PC-9 (cell line): ENCODE measurements at regions of chr20 and their contacts with region 1.

Region 1: DNA sequence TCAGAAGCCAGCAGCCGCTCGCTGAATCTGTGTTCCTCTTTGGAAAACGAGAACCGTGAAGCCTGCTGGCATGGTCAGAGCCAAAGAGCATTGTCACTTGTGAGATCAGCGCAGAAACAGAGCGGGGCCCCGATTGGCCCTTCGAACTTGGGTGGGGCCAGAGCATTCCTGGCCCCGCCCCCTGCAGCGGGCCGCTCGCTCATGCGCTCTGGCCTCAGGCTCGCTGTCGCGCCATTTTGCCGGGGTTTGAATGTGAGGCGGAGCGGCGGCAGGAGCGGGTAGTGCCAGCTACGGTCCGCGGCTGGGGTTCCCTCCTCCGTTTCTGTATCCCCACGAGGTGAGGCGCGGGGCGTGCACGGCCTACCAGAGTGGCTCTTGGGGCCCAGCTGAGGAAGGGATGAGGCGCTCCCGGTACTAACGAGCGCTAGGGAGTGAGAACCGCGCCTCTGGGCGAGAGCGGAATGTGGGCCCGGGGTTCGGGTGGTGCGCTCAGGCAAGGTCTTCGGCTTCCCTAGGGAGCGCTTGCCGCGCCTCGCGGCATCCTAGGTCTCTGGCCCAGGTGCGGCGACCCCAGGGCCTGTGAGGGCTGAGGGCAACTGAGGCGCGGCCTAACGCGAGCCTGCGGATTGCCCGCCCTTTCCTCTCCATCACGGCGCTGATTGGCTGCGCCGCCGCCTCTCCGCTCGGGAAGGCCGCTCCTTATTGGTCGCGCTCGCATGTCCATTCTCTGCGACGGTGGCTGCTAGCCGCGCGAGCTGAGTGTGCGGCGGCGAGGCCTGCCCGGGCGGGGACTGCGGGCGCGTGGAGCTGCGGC is at the start of gene CSE1L:
- DNase-seq: peak; percentile 85 to 96
- H3K4me3 ChIP-seq: peak within 1 kb of the TSS; percentile 96
- H3K27ac ChIP-seq: peak within 1 kb of the TSS; percentile 62
- H3K4me1 ChIP-seq: peaks cover 19% of the 10 kb centered on the region
- H3K27me3 ChIP-seq: no peaks in the 10 kb centered on the region
- CTCF ChIP-seq: no peak; the same call in 1 of the 2 replicates
- total RNA-seq, gene CSE1L: 83.1 and 132 TPM in 2 replicates

Region 2: DNA sequence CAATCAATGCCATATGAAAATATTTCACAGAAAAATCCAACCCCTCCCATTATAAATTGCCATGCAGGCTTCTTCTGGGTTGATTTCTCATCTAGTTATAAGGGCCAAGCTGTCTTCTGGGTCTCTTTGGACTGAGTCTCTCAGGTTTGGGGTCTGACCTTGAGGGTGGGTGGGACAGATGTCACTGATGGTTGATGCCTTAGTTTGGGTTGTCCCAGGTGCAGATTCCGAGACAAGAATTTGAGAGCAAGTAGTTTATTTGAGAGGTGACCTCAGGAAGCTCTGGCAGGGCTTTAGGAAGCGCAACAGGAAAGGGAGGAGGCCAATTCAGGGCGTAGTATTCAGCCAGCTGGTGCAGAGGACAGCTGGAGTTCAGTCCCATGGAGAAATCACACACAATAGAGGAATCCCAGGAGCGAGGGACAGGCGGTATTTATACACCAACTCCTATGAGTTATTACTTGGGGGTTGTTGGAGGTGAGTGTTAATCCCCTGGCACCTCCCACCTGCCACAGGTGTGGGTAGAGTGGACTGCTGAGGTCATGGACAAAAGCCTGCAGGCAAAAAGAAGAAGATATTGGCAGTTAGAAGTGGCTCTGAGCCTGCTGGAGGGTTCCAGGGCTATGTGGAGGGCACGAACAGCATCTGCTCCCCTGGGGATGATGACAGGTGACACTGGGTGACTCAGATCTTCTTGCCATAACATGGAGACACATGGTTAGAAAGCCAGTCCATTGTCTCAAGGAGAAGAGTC is 1247.2 kb before region 1 on chr20:
- CTCF ChIA-PET with region 1: no interaction called
- POLR2A ChIA-PET with region 1: interaction called, 16 read pairs
- intact Hi-C with region 1: no loop called
- DNase-seq: peak; percentile 58 to 74
- H3K4me3 ChIP-seq: no peak overlapping the region
- H3K27ac ChIP-seq: peak overlapping the region; percentile 15
- H3K4me1 ChIP-seq: peaks cover 60% of the 10 kb centered on the region
- H3K27me3 ChIP-seq: no peaks in the 10 kb centered on the region
- CTCF ChIP-seq: no peak

Region 3: GRCh38 chr20:48845721-48846306 is 200.5 kb before region 1 on chr20:
- CTCF ChIA-PET with region 1: no interaction called
- POLR2A ChIA-PET with region 1: interaction called, 13 read pairs
- intact Hi-C with region 1: no loop called
- DNase-seq: peak in 1 of 2 experiments; percentile 9
- H3K4me3 ChIP-seq: no peak overlapping the region
- H3K27ac ChIP-seq: no peak overlapping the region
- H3K4me1 ChIP-seq: peaks cover 14% of the 10 kb centered on the region
- H3K27me3 ChIP-seq: no peaks in the 10 kb centered on the region
- CTCF ChIP-seq: no peak

Region 4: GRCh38 chr20:49460916-49461315 is 414.6 kb after region 1 on chr20:
- CTCF ChIA-PET with region 1: no interaction called
- POLR2A ChIA-PET with region 1: no interaction called
- intact Hi-C with region 1: no loop called
- DNase-seq: peak; percentile 21 to 71
- H3K4me3 ChIP-seq: no peak overlapping the region
- H3K27ac ChIP-seq: no peak overlapping the region
- H3K4me1 ChIP-seq: no peaks in the 10 kb centered on the region
- H3K27me3 ChIP-seq: peaks cover 89% of the 10 kb centered on the region
- CTCF ChIP-seq: no peak